AG04449 (cell line): ENCODE measurements at regions of chr2 and their contacts with region 1.

Region 1: DNA sequence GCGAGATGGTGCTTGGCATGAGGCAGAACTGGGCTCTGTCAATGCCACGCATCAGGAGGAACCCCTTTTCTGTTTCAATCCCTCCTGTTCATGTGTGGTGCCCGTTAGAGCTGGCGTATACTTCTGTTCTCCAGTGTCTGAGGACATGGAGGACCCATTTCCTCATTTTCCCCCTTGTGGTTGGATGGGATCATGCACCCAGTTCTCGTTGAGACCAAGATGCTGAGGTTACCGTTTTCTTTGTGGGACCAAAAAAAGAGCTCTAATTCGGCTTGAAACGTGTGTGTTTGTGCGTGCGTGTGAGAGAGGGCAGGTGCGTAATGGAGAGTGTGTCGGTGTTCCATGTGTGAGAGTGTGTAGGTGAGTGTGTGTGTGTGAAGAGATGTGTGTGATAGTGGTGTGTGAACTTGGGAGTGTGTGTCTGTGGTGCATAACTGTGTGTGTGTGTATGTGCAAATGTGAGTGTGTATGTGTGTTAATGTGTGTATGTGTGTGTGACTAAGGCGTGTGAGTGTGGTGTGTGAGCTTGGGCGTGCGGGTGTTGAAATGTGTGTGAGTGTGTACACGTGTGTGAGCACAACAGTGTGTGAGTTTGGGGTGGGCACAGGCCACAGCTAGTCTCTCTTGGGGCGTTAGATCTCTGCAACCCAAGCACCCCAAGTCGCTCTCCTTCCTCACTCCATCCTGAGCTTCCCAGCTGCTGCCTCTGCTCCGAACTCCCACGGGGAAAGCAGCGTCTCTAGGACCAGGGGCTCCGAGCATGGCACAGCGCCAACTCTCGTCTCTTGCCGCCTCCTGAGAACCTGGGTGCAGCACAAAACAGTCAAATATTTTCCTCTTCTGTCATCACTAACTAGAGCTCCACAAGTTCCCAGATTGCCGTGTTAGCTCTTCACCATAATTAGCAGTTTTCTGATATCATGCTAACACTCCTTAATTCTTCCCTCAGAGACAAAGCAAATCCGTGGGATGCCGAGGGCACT is 75.8 kb downstream of the LONRF2 start:
- DNase-seq: no peak
- H3K4me3 ChIP-seq: no peak overlapping the region
- CTCF ChIP-seq: peak; percentile 14

Region 2: GRCh38 chr2:99725820-99726219 is 520.6 kb before region 1 on chr2:
- CTCF ChIA-PET with region 1: interaction called, 14 read pairs
- POLR2A ChIA-PET with region 1: no interaction called
- DNase-seq: no peak
- H3K4me3 ChIP-seq: no peak overlapping the region
- CTCF ChIP-seq: no peak

Region 3: GRCh38 chr2:100272841-100273329 is 26.4 kb after region 1 on chr2:
- CTCF ChIA-PET with region 1: no interaction called
- POLR2A ChIA-PET with region 1: no interaction called
- DNase-seq: no peak
- H3K4me3 ChIP-seq: no peak overlapping the region
- CTCF ChIP-seq: no peak